CD4-positive, alpha-beta T cell (primary cell): ENCODE measurements at regions of chr14 and their contacts with region 1.

Region 1: GRCh38 chr14:62126879-62127478 is 364.8 kb downstream of the SNAPC1 start:
- DNase-seq: peak in 3 of 14 experiments; percentile 53 to 60 (median 58)
- ATAC-seq: peak; percentile 75
- H3K4me3 ChIP-seq: no peak overlapping the region
- H3K4me3 Mint-ChIP-seq: no peak overlapping the region
- H3K27ac ChIP-seq: no peak overlapping the region
- H3K27ac Mint-ChIP-seq: no peak overlapping the region
- H3K4me1 ChIP-seq: no peaks in the 10 kb centered on the region
- H3K4me1 Mint-ChIP-seq: no peaks in the 10 kb centered on the region
- H3K27me3 ChIP-seq: peaks cover 6 to 13% of the 10 kb centered on the region in 2 experiments
- H3K27me3 Mint-ChIP-seq: peaks cover 71% of the 10 kb centered on the region
- CTCF ChIP-seq: peak; percentile 74

Region 2: DNA sequence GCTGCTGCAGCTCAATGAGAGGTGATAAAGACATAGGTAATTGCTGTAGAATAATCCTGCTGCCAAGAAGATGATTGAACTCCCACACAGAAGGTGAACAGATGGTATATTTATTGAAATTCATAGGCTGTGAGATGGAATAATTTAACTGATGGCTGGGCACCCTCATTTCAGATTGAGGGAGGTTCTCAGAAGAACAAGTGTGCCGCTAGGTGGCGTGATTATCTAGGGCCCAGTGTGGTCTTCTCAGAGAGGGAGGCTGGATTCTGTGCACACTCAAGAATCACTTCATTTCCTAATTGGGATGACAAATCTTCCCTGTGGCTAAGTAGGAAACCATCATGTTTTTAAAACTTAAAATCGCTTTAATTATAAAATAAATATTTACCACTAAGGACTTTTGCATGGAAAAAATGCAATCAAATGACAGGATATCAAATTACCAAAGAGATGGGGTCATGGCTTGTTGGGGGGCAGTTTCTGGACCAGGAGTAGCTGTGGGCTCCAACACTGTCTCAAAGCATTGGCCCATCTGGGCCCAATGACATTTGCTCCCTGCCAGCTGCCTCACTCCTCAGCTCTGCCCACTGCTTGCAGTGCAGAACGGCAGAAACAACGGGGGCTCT is 232.4 kb before region 1 on chr14:
- CTCF ChIA-PET with region 1: interaction called, 3 read pairs
- POLR2A ChIA-PET with region 1: interaction called, 3 read pairs
- intact Hi-C with region 1: loop called (anchors 1 kb)
- DNase-seq: peak; percentile 17 to 70 (median 42)
- ATAC-seq: no peak
- H3K4me3 ChIP-seq: no peak overlapping the region
- H3K4me3 Mint-ChIP-seq: no peak overlapping the region
- H3K27ac ChIP-seq: no peak overlapping the region
- H3K27ac Mint-ChIP-seq: no peak overlapping the region
- H3K4me1 ChIP-seq: peaks cover 7% of the 10 kb centered on the region
- H3K4me1 Mint-ChIP-seq: peaks cover 11% of the 10 kb centered on the region
- H3K27me3 ChIP-seq: no peaks in the 10 kb centered on the region
- H3K27me3 Mint-ChIP-seq: peaks cover 4% of the 10 kb centered on the region
- CTCF ChIP-seq: peak; percentile 70

Region 3: GRCh38 chr14:61925043-61925442 is 201.9 kb before region 1 on chr14:
- CTCF ChIA-PET with region 1: interaction called, 11 read pairs
- POLR2A ChIA-PET with region 1: interaction called, 3 read pairs
- intact Hi-C with region 1: loop called in 1 of 2 experiments (anchors 10 kb)
- DNase-seq: peak in 4 of 14 experiments; percentile 6 to 33 (median 22)
- ATAC-seq: no peak
- H3K4me3 ChIP-seq: no peak overlapping the region
- H3K4me3 Mint-ChIP-seq: no peak overlapping the region
- H3K27ac ChIP-seq: no peak overlapping the region
- H3K27ac Mint-ChIP-seq: no peak overlapping the region
- H3K4me1 ChIP-seq: no peaks in the 10 kb centered on the region
- H3K4me1 Mint-ChIP-seq: no peaks in the 10 kb centered on the region
- H3K27me3 ChIP-seq: peaks cover 0 to 9% of the 10 kb centered on the region in 2 experiments
- H3K27me3 Mint-ChIP-seq: peaks cover 52% of the 10 kb centered on the region
- CTCF ChIP-seq: no peak